RWPE1 (cell line): ENCODE measurements at regions of chr6 and their contacts with region 1.

Region 1: GRCh38 chr6:18527836-18528743 is 140.9 kb downstream of the RNF144B start:
- DNase-seq: no peak
- H3K27ac ChIP-seq: no peak overlapping the region
- CTCF ChIP-seq: peak; percentile 30; the same call in 1 of the 2 replicates

Region 2: GRCh38 chr6:18595774-18596530 is 67.9 kb after region 1 on chr6:
- CTCF ChIA-PET with region 1: interaction called, 10 read pairs
- POLR2A ChIA-PET with region 1: no interaction called
- DNase-seq: peak; percentile 51
- H3K27ac ChIP-seq: no peak overlapping the region
- CTCF ChIP-seq: peak; percentile 91